ENCODE measurements at regions of chr10 and their contacts with region 1.

Region 1: GRCh38 chr10:79068562-79069324 is at the start of gene ZMIZ1:
- DNase-seq: peak; percentile 65
- H3K4me3 ChIP-seq: peak within 1 kb of the TSS; percentile 95
- CTCF ChIP-seq: peak; percentile 12

Region 2: DNA sequence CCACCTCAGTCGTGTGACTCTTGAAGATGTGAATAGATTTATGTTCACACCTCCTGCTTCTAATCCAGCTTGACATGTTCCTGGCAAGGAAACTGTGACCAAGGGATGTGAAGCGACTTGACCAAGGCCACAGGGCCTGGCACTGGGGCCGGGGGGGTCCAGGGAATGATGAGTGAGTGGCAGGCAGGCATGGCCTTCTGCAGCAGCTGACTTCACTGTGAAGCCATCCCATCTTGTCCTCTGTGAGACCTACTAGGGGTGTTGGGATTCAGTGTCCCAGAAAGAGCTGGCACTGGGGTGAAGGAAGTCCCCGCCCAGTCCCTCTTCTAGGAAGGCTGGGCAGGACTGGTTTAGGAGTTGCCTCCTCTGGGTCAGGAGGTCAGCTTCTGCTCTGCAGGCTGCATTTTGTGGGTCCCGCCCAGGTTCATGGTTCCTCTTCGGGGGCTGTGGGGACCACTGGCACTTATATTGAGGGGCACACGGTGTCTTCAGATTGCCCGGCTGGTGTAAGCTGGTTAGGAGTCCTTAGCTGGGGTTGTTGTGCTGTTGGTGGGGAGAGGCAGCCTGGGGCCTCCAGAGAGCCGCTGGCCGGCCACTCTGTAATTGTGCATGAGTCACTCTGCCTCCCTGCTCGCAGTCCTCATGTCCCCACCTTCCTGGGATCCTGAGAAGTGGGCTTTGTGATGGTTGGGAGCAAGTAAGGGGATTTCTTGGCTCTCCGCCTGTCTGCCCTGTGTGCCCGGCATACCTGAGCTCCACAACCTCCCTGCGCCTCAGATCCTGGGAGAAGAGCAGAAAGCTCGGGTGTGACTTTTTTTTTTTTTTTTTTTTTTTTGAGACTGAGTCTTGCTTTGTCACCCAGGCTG is 11.0 kb after region 1 on chr10:
- CTCF ChIA-PET with region 1: interaction called, 11 read pairs
- POLR2A ChIA-PET with region 1: interaction called, 4 read pairs
- DNase-seq: no peak
- H3K4me3 ChIP-seq: no peak overlapping the region
- CTCF ChIP-seq: no peak

Measured in AG04449 (cell line).